MCF 10A (cell line): ENCODE measurements at regions of chr6 and their contacts with region 1.

Region 1: GRCh38 chr6:45377554-45378333 is at the start of gene SUPT3H:
- DNase-seq: peak; percentile 91
- H3K4me3 Mint-ChIP-seq: peak within 1 kb of the TSS; percentile 98
- H3K27ac Mint-ChIP-seq: peak within 1 kb of the TSS; percentile 98
- H3K4me1 Mint-ChIP-seq: peaks cover 24% of the 10 kb centered on the region
- H3K27me3 Mint-ChIP-seq: no peaks in the 10 kb centered on the region
- CTCF ChIP-seq: no peak
- total RNA-seq, gene SUPT3H: 12.7 and 14.4 TPM in 2 replicates

Region 2: DNA sequence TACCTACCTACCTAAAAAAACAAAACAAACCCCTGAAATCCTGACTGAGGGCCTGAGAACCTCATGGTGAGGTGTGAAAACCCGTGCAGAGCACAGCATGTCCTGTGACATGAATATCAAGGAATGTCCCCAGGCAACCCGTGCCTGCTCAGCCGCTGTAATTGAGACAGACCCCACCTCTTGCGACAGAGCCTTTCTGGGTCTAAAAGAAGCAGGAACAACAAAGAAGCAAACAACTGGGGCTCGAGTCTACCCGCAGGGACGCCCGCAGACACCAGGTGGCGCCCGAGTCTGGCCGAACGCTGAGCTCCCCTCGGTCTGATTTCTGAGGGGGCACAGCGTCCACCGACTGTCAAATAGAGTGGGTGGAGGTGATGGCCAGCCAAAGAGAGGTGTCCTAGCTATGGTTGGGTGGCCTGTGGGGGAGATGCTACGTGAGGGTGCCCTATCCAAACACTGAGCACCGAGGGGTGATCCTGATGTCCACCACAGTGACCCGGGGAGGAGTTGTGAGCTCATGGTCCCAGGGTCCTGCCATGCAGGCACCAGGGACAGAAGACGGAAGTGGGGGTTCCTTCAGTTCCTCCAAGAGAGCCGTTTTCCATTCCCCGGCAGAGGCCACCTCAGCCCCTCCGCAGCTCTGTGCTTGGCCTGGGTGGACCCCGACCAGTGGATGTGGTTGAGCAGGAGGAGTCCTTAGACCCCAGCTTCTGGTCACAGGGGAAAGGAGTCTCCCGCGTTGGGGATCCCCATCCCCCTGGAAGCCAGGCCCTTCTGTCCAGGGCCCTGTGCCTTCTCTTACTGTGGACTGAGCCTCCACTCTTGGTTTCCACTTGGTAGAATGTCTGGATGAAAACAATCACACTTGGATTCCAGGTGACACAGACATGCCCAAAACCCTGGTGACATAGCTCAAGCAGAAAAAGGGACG is 722.1 kb before region 1 on chr6:
- CTCF ChIA-PET with region 1: interaction called, 12 read pairs
- POLR2A ChIA-PET with region 1: no interaction called
- intact Hi-C with region 1: loop called (anchors 1 kb)
- DNase-seq: peak; percentile 66
- H3K4me3 Mint-ChIP-seq: peak overlapping the region; percentile 3
- H3K27ac Mint-ChIP-seq: peak overlapping the region; percentile 76
- H3K4me1 Mint-ChIP-seq: peaks cover 13% of the 10 kb centered on the region
- H3K27me3 Mint-ChIP-seq: no peaks in the 10 kb centered on the region
- CTCF ChIP-seq: peak; percentile 97

Region 3: GRCh38 chr6:45075246-45075645 is 302.5 kb before region 1 on chr6:
- CTCF ChIA-PET with region 1: no interaction called
- POLR2A ChIA-PET with region 1: interaction called, 3 read pairs
- intact Hi-C with region 1: loop called (anchors 10 kb)
- DNase-seq: peak; percentile 74
- H3K4me3 Mint-ChIP-seq: peak overlapping the region; percentile 28
- H3K27ac Mint-ChIP-seq: peak overlapping the region; percentile 89
- H3K4me1 Mint-ChIP-seq: peaks cover 26% of the 10 kb centered on the region
- H3K27me3 Mint-ChIP-seq: no peaks in the 10 kb centered on the region
- CTCF ChIP-seq: no peak

Region 4: GRCh38 chr6:45394586-45395095 is 16.9 kb after region 1 on chr6:
- CTCF ChIA-PET with region 1: interaction called, 4 read pairs
- POLR2A ChIA-PET with region 1: interaction called, 10 read pairs
- intact Hi-C with region 1: no loop called
- DNase-seq: no peak
- H3K4me3 Mint-ChIP-seq: no peak overlapping the region
- H3K27ac Mint-ChIP-seq: no peak overlapping the region
- H3K4me1 Mint-ChIP-seq: peaks cover 9% of the 10 kb centered on the region
- H3K27me3 Mint-ChIP-seq: peaks cover 19% of the 10 kb centered on the region
- CTCF ChIP-seq: no peak